ENCODE measurements at regions of chr21 and their contacts with region 1.

Region 1: GRCh38 chr21:45140346-45140940 is 66.1 kb downstream of the ADARB1 start:
- DNase-seq: peak; percentile 74 to 81 (median 77)
- H3K4me3 ChIP-seq: no peak overlapping the region
- H3K4me3 Mint-ChIP-seq: no peak overlapping the region
- H3K27ac ChIP-seq: no peak overlapping the region
- H3K27ac Mint-ChIP-seq: peak overlapping the region in 2 of 7 donors; percentile 26 to 65
- H3K4me1 ChIP-seq: peaks cover 0 to 4% of the 10 kb centered on the region in 2 donors
- H3K4me1 Mint-ChIP-seq: peaks cover 6% of the 10 kb centered on the region
- H3K27me3 ChIP-seq: no peaks in the 10 kb centered on the region
- H3K27me3 Mint-ChIP-seq: peaks cover 0 to 2% (median 1%) of the 10 kb centered on the region in 3 donors
- CTCF ChIP-seq: peak; percentile 87

Region 2: DNA sequence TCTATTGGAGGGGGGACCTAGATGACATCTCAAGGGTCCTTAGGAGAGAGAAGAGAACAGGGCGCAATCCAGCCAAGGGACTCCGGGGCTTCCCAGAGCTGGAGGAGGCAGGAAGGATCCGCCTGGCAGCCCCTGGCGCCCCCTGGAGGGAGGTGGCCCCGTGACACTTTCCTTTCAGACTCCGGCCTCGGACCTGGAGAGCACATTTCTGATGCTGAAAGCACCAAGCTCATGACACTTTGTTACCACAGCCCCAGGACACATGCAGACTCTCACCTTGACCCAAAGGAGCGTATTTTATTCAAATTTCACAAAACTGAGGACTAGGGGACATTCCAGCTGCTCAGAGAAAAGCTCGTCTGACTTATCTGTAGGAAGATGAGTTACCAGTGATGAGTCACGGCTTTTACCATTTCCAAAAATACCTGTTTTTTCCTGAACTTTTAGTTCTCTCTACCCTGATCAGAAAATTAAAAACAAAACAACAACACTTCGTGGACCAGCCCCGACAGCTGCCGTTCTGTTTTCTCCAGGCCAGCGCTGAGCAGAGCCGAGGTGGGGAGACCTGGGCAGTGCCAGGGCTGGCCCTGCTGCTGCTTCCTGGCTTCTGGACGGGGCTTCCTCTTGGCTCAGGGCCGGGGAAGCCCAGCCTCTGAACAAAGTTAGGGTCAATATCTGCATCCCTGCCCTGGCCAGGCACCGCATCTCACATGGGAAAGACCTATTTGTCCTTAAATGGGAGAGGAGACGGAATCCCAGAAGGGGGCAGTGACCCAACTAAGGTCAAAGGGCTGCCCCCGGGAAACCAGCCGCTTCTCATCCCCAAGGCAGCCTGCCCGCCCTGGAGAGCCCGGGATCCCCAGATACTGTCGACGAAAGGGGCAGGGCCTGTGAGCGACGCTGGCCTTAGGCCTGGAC is 168.9 kb after region 1 on chr21:
- intact Hi-C with region 1: no loop called
- DNase-seq: peak; percentile 25 to 52 (median 42)
- H3K4me3 ChIP-seq: peak overlapping the region in 1 of 3 experiments; percentile 38
- H3K4me3 Mint-ChIP-seq: peak overlapping the region in 1 of 2 donors; percentile 75
- H3K27ac ChIP-seq: no peak overlapping the region
- H3K27ac Mint-ChIP-seq: peak overlapping the region in 1 of 7 donors; percentile 32
- H3K4me1 ChIP-seq: peaks cover 6 to 10% of the 10 kb centered on the region in 2 donors
- H3K4me1 Mint-ChIP-seq: peaks cover 17% of the 10 kb centered on the region
- H3K27me3 ChIP-seq: no peaks in the 10 kb centered on the region
- H3K27me3 Mint-ChIP-seq: peaks cover 4 to 8% (median 6%) of the 10 kb centered on the region in 3 donors
- CTCF ChIP-seq: peak; percentile 81

Region 3: DNA sequence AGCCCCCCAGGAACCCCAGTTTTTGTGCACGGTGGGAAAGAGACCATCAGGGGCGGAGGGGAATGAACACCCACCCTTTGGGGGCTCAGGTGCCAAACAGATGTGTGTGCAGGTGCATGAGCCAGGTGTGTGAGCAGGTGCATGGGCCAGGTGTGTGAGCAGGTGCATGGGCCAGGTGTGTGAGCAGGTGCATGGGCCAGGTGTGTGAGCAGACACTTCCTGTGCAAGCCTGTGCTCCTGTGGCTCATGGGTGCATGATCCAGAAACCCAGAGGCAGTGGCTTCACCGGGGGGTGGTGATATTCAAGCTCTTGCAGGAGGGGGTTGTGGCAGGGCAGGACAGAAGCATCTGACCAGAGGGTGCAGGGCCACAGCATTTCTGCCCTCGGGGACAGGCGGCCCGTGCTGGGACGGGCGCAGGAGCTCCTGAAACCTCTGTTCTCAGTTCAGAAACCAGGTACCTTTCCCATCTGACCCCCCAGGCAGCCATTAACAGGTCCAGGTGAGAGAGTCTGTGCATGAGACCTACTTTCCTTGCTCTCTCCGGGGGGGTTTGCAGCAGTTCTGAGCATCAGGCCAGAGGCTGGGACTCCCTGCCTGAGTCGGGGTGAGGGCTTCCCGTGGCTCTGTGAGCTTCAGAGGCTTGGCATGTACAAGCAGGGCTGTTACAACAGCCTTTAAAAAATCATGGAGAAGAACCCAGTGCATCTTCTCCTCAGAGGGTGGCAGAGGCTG is 293.6 kb after region 1 on chr21:
- intact Hi-C with region 1: loop called (anchors 2 to 5 kb)
- DNase-seq: no peak
- H3K4me3 ChIP-seq: no peak overlapping the region
- H3K4me3 Mint-ChIP-seq: no peak overlapping the region
- H3K27ac ChIP-seq: no peak overlapping the region
- H3K27ac Mint-ChIP-seq: peak overlapping the region in 1 of 7 donors; percentile 36
- H3K4me1 ChIP-seq: peaks cover 15 to 18% of the 10 kb centered on the region in 2 donors
- H3K4me1 Mint-ChIP-seq: peaks cover 12% of the 10 kb centered on the region
- H3K27me3 ChIP-seq: no peaks in the 10 kb centered on the region
- H3K27me3 Mint-ChIP-seq: peaks cover 0 to 22% (median 6%) of the 10 kb centered on the region in 3 donors
- CTCF ChIP-seq: no peak

Region 4: GRCh38 chr21:45439161-45439872 is 298.9 kb after region 1 on chr21:
- intact Hi-C with region 1: loop called (anchors 2 to 5 kb)
- DNase-seq: peak; percentile 85 to 90 (median 85)
- H3K4me3 ChIP-seq: peak overlapping the region; percentile 4 to 71 (median 20)
- H3K4me3 Mint-ChIP-seq: peak overlapping the region; percentile 67 to 80
- H3K27ac ChIP-seq: peak overlapping the region; percentile 45 to 78
- H3K27ac Mint-ChIP-seq: peak overlapping the region in 6 of 7 donors; percentile 72 to 87 (median 82)
- H3K4me1 ChIP-seq: peaks cover 16 to 21% of the 10 kb centered on the region in 2 donors
- H3K4me1 Mint-ChIP-seq: peaks cover 19% of the 10 kb centered on the region
- H3K27me3 ChIP-seq: no peaks in the 10 kb centered on the region
- H3K27me3 Mint-ChIP-seq: peaks cover 2 to 6% (median 4%) of the 10 kb centered on the region in 3 donors
- CTCF ChIP-seq: peak; percentile 95